ENCODE measurements at regions of chr11 and their contacts with region 1.

Region 1: DNA sequence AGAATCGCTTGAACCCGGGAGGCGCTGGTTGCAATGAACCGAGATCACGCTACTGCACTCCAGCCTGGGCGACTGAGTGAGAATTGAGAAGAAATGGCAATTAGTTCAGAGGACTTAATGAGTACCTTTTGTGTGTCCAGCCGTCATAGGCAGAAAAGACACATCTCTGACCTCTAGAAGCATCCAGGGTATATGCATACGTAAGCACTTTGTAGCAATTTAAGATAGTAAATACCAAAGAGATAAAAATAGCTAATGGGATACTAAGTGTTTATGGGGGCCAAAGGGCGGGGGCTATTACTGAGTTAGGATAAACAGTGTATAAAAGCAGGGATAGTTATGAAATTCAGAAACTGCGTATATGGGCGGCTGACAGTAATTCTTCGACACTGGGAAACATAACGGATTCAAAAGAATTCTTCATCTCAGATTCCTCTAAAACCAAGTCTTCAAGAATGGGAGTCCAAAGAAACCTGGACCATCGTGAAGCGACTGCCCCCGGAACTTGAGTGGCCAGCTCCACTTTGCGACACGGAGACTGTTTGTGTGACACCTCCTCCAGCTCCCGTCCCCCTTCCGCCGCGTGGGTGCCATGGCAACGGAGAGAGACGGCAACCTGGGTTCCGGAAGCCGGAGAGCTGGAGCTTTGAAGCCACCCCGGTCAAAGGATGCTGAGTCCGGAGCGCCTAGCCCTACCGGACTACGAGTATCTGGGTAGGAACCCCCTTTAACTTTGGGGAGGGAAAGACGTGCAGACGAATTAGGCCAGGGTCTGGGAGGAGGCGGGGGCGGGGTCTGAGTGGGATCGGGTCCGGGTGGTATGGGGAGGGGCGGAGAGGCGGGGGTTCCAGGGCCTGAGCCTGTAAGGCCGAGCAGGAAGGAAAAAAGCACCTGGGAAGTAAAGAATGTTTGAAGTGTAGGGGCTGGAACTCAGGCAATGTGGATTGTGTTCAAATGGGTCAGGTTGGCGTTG is at the start of gene CSTPP1:
- DNase-seq: peak; percentile 48
- ATAC-seq: peak; percentile 98
- H3K4me3 ChIP-seq: peak within 1 kb of the TSS; percentile 70 to 72
- H3K27ac ChIP-seq: peak within 1 kb of the TSS; percentile 78
- H3K4me1 ChIP-seq: no peaks in the 10 kb centered on the region
- H3K27me3 ChIP-seq: no peaks in the 10 kb centered on the region; the same call in 1 of the 2 replicates
- CTCF ChIP-seq: no peak
- total RNA-seq, gene CSTPP1: 29.0 TPM

Region 2: GRCh38 chr11:46903846-46904245 is 32.6 kb before region 1 on chr11:
- CTCF ChIA-PET with region 1: no interaction called
- POLR2A ChIA-PET with region 1: interaction called, 10 read pairs
- in situ Hi-C with region 1: no loop called
- intact Hi-C with region 1: no loop called
- DNase-seq: no peak
- ATAC-seq: no peak
- H3K4me3 ChIP-seq: no peak overlapping the region
- H3K27ac ChIP-seq: no peak overlapping the region
- H3K4me1 ChIP-seq: no peaks in the 10 kb centered on the region
- H3K27me3 ChIP-seq: no peaks in the 10 kb centered on the region
- CTCF ChIP-seq: no peak

Region 3: DNA sequence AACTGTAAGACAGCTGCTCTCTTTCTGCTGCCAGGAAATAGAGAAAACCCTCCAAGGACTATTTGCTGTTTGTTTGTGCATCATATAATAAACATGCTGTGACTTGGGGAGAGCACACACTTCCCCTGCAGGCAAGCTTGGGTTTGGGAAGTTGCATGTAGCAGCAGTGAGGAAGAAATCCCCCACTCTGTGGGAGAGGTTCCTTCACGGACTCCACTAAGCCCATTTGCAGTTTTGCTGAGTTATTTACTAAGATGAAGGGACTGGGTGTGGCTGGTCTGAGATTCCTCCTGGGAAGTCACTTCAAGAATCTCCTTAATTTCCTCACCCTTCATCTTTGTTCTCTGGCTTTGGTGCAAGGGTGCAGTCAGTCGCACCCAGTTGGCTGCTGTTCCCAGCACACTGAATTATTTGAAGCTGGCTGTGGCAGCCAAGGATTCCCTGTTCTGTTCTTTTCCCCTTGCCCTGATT is 135.4 kb after region 1 on chr11:
- CTCF ChIA-PET with region 1: no interaction called
- POLR2A ChIA-PET with region 1: no interaction called
- in situ Hi-C with region 1: no loop called
- intact Hi-C with region 1: no loop called
- DNase-seq: no peak
- ATAC-seq: no peak; the same call in 1 of the 2 replicates
- H3K4me3 ChIP-seq: no peak overlapping the region
- H3K27ac ChIP-seq: 0 out of 2 replicates have a peak overlapping the region, but pooled peaks have one; percentile 25
- H3K4me1 ChIP-seq: no peaks in the 10 kb centered on the region
- H3K27me3 ChIP-seq: no peaks in the 10 kb centered on the region
- CTCF ChIP-seq: no peak

Measured in Panc1 (cell line).